MCF 10A (cell line): ENCODE measurements at regions of chr20 and their contacts with region 1.

Region 1: GRCh38 chr20:39049684-39050554 is 87.8 kb downstream of the DHX35 start:
- DNase-seq: peak; percentile 64
- H3K4me3 Mint-ChIP-seq: peak overlapping the region; percentile 78
- H3K27ac Mint-ChIP-seq: no peak overlapping the region
- H3K4me1 Mint-ChIP-seq: peaks cover 5% of the 10 kb centered on the region
- H3K27me3 Mint-ChIP-seq: peaks cover 15% of the 10 kb centered on the region
- CTCF ChIP-seq: peak; percentile 96

Region 2: GRCh38 chr20:38757145-38757775 is 292.7 kb before region 1 on chr20:
- CTCF ChIA-PET with region 1: interaction called, 40 read pairs
- POLR2A ChIA-PET with region 1: no interaction called
- intact Hi-C with region 1: loop called (anchors 10 kb)
- DNase-seq: no peak
- H3K4me3 Mint-ChIP-seq: no peak overlapping the region
- H3K27ac Mint-ChIP-seq: no peak overlapping the region
- H3K4me1 Mint-ChIP-seq: no peaks in the 10 kb centered on the region
- H3K27me3 Mint-ChIP-seq: no peaks in the 10 kb centered on the region
- CTCF ChIP-seq: no peak

Region 3: DNA sequence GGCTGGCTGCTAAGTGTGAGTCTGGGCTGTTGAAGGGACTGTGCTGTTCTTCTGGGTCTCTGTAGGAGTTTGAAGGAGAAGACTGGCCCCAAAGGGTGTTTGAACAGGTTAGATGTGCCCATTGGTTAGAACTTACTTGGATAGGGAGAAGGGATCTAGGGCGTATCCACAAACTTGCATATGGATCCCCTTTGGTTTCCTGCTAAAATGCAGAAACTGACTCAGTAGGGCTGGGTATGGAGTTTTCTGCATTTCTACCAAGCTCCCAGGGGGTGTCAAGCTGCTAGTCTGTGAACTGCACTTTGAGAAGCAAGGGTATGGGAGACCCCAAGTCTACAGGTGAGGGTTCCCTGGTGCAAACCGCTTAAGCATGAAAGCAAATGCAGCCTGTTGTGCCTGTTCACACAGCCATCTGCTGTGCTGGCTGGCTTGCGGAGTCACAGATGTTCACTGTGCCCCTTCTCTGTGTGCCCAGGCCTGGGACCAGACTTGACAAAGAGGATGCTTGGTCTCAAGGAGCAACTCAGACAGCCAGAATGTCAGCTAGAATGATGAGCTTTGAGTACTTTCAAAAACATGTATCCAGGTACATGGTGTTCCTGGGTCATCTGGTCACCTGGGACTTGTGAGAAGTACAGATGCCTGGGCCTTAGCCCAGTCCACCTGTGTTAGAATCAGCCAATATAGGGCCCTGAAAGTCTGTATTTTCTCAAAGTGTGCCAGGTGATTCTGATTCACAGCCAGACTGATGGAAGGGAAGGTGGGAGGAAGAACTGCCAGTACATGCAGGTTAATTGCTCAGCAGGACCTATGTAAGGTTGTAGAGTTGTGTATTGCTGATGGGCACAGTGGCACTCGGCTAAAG is 237.0 kb before region 1 on chr20:
- CTCF ChIA-PET with region 1: no interaction called
- POLR2A ChIA-PET with region 1: no interaction called
- intact Hi-C with region 1: no loop called
- DNase-seq: no peak
- H3K4me3 Mint-ChIP-seq: no peak overlapping the region
- H3K27ac Mint-ChIP-seq: no peak overlapping the region
- H3K4me1 Mint-ChIP-seq: no peaks in the 10 kb centered on the region
- H3K27me3 Mint-ChIP-seq: peaks cover 14% of the 10 kb centered on the region
- CTCF ChIP-seq: no peak

Region 4: GRCh38 chr20:38907918-38908677 is 141.8 kb before region 1 on chr20:
- CTCF ChIA-PET with region 1: interaction called, 22 read pairs
- POLR2A ChIA-PET with region 1: no interaction called
- intact Hi-C with region 1: no loop called
- DNase-seq: no peak
- H3K4me3 Mint-ChIP-seq: no peak overlapping the region
- H3K27ac Mint-ChIP-seq: no peak overlapping the region
- H3K4me1 Mint-ChIP-seq: no peaks in the 10 kb centered on the region
- H3K27me3 Mint-ChIP-seq: peaks cover 40% of the 10 kb centered on the region
- CTCF ChIP-seq: no peak

Region 5: GRCh38 chr20:38973645-38974044 is 76.3 kb before region 1 on chr20:
- CTCF ChIA-PET with region 1: interaction called, 16 read pairs
- POLR2A ChIA-PET with region 1: no interaction called
- intact Hi-C with region 1: no loop called
- DNase-seq: peak; percentile 8
- H3K4me3 Mint-ChIP-seq: no peak overlapping the region
- H3K27ac Mint-ChIP-seq: peak overlapping the region; percentile 19
- H3K4me1 Mint-ChIP-seq: peaks cover 12% of the 10 kb centered on the region
- H3K27me3 Mint-ChIP-seq: no peaks in the 10 kb centered on the region
- CTCF ChIP-seq: no peak

Region 6: DNA sequence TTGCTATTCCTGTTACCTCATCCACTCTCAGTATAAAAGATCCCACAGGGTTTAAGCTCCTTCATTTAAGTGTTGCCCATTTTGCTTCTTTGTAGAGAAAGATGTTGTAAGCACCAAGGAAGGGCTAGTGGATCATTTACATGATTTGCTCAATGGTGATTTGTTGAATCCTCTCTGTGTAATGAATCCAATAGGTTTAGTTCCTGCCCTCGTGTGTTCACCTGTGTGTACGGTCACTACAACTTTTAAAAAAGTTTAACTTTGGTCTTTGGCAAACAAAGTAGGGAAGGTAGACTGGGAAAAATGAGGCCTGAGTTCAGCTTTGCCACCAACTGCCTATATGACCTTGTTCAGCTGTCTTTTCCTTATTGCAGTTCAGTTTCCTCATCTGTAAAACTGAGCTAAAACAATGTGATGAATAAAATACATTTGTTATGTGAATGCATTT is 36.2 kb before region 1 on chr20:
- CTCF ChIA-PET with region 1: interaction called, 16 read pairs
- POLR2A ChIA-PET with region 1: no interaction called
- intact Hi-C with region 1: no loop called
- DNase-seq: no peak
- H3K4me3 Mint-ChIP-seq: no peak overlapping the region
- H3K27ac Mint-ChIP-seq: no peak overlapping the region
- H3K4me1 Mint-ChIP-seq: no peaks in the 10 kb centered on the region
- H3K27me3 Mint-ChIP-seq: no peaks in the 10 kb centered on the region
- CTCF ChIP-seq: no peak

Region 7: DNA sequence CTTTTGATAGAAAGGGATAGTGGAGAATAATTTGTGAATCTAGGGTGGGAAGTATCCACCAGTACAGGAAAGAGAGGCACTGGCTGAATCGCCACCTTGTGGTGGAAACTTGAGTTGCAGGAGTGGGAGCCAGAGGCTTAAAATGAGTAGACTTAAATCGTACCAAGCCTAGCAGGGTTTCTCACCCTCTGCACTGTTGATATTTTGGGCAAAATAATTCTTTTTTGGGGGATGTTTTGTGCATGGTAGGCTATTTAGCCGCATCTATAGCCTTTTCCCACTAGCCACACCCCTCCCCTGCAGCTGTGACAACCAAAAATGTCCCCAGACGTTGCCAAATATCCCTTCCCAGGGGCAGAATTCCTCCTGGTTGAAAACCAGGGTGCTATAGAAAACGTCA is 31.3 kb after region 1 on chr20:
- CTCF ChIA-PET with region 1: interaction called, 622 read pairs
- POLR2A ChIA-PET with region 1: interaction called, 15 read pairs
- intact Hi-C with region 1: loop called (anchors 1 kb)
- DNase-seq: peak; percentile 78
- H3K4me3 Mint-ChIP-seq: no peak overlapping the region
- H3K27ac Mint-ChIP-seq: no peak overlapping the region
- H3K4me1 Mint-ChIP-seq: no peaks in the 10 kb centered on the region
- H3K27me3 Mint-ChIP-seq: peaks cover 58% of the 10 kb centered on the region
- CTCF ChIP-seq: peak; percentile 90

Region 8: DNA sequence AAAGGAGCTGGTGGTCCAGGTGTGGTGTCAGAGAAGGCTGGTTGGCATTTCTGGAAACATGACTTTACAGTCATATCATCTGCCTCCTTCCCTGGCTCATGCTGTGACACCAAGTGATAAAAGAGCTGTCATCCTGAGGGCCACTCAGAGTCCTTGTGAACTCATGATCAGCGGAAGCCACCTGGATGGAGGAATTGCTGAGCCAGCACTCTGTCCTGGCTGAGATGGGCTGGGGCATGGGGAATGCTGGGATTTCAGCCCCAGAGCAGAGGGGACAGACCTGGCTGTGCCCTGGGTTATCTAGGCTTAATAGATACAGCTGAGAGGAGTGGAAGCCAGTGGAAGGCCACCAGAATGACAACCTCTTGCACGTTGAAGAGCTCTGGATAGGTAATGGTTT is 126.5 kb after region 1 on chr20:
- CTCF ChIA-PET with region 1: no interaction called
- POLR2A ChIA-PET with region 1: no interaction called
- intact Hi-C with region 1: no loop called
- DNase-seq: no peak
- H3K4me3 Mint-ChIP-seq: no peak overlapping the region
- H3K27ac Mint-ChIP-seq: no peak overlapping the region
- H3K4me1 Mint-ChIP-seq: peaks cover 4% of the 10 kb centered on the region
- H3K27me3 Mint-ChIP-seq: peaks cover 12% of the 10 kb centered on the region
- CTCF ChIP-seq: no peak

Region 9: DNA sequence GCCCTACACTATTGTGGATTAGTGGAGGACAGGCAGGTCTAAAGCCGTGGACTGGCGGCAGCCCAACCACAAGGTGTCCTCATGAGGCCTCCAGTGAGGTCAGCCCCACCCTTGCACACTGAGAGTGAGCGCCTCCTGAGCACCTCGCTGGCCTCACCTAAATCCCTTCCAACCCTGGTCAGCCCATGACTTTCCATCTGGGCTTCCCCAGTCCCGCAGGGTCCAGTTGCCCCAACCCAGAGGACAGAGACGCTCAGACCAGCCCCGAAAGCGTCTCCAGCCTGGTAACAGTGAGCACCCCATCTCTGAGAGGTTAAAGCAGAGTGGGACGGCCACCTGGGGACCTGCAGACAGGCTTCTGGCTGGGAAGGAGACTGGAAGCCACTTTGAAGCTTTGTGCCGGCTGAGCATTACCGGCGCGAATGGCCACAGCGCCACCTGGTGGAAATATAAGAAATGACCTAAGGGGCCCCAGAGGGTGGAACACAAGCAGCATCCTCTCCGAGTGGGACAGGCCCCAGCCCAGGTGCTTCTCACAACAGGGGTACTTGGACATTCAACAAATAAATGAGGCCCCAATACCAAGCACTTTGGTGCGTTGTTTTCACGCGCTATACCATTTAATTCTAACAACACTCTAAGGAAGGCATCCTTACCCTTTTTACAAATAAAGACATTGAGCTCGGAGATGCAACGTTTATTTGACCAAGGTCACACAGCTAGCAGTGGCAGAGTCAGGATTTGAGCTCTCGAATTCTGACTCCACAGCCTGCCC is 1913.0 kb after region 1 on chr20:
- CTCF ChIA-PET with region 1: interaction called, 25 read pairs
- POLR2A ChIA-PET with region 1: interaction called, 5 read pairs
- intact Hi-C with region 1: no loop called
- DNase-seq: peak; percentile 71
- H3K4me3 Mint-ChIP-seq: no peak overlapping the region
- H3K27ac Mint-ChIP-seq: no peak overlapping the region
- H3K4me1 Mint-ChIP-seq: peaks cover 20% of the 10 kb centered on the region
- H3K27me3 Mint-ChIP-seq: no peaks in the 10 kb centered on the region
- CTCF ChIP-seq: peak; percentile 84